Mammary epithelial cell (primary cell): ENCODE measurements at regions of chr20 and their contacts with region 1.

Region 1: GRCh38 chr20:18287915-18288748 is at the start of gene ZNF133:
- DNase-seq: peak; percentile 97
- H3K4me3 ChIP-seq: peak within 1 kb of the TSS; percentile 80 to 85 (median 85)
- H3K27ac ChIP-seq: peak within 1 kb of the TSS; percentile 95
- H3K4me1 ChIP-seq: peaks cover 16% of the 10 kb centered on the region
- H3K27me3 ChIP-seq: no peaks in the 10 kb centered on the region
- CTCF ChIP-seq: no peak
- total RNA-seq, gene ZNF133: 26.8 to 32.6 TPM

Region 2: GRCh38 chr20:17968366-17969279 is 319.5 kb before region 1 on chr20 and contains the starts of genes MGME1 and SNX5:
- CTCF ChIA-PET with region 1: no interaction called
- dilution Hi-C with region 1: no loop called
- in situ Hi-C with region 1: loop called in 1 of 2 experiments (anchors 25 kb)
- intact Hi-C with region 1: no loop called
- DNase-seq: peak; percentile 99
- H3K4me3 ChIP-seq: peak within 1 kb of the TSS; percentile 88 to 93 (median 91)
- H3K27ac ChIP-seq: peak within 1 kb of the TSS; percentile 98
- H3K4me1 ChIP-seq: peaks cover 26% of the 10 kb centered on the region
- H3K27me3 ChIP-seq: no peaks in the 10 kb centered on the region
- CTCF ChIP-seq: no peak
- total RNA-seq, gene MGME1: 15.8 to 36.2 TPM
- total RNA-seq, gene SNX5: 68.0 to 137 TPM

Region 3: DNA sequence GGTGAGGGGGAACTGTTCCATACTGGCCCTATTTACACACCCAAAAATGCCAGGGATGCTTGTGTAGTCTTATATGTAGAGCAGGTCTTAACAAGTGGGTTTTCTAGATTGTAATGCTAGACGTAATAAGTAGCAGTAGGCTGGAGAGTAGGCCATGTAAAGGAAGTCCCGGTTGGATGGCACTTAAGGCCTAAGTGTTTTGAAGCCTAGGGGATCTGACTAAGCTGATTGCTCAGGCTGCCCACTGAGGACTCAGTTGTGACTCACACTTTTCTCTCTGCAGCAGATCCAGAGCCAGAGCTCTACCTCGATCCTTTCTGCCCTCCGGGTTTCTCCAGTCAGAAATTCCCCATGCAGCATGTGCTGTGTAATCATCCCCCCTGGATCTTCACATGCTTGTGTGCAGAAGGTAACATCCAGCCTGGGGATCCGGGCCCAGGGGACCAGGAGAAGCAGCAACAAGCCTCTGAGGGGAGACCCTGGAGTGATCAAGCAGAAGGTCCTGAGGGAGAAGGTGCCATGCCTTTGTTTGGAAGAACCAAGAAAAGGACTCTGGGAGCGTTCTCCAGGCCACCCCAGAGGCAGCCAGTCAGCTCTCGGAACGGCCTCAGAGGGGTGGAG is 26.8 kb after region 1 on chr20:
- CTCF ChIA-PET with region 1: no interaction called
- dilution Hi-C with region 1: no loop called
- in situ Hi-C with region 1: no loop called
- intact Hi-C with region 1: loop called (anchors 1 kb)
- DNase-seq: peak; percentile 99
- H3K4me3 ChIP-seq: no peak overlapping the region
- H3K27ac ChIP-seq: peak overlapping the region; percentile 83
- H3K4me1 ChIP-seq: peaks cover 35% of the 10 kb centered on the region
- H3K27me3 ChIP-seq: no peaks in the 10 kb centered on the region
- CTCF ChIP-seq: no peak

Region 4: DNA sequence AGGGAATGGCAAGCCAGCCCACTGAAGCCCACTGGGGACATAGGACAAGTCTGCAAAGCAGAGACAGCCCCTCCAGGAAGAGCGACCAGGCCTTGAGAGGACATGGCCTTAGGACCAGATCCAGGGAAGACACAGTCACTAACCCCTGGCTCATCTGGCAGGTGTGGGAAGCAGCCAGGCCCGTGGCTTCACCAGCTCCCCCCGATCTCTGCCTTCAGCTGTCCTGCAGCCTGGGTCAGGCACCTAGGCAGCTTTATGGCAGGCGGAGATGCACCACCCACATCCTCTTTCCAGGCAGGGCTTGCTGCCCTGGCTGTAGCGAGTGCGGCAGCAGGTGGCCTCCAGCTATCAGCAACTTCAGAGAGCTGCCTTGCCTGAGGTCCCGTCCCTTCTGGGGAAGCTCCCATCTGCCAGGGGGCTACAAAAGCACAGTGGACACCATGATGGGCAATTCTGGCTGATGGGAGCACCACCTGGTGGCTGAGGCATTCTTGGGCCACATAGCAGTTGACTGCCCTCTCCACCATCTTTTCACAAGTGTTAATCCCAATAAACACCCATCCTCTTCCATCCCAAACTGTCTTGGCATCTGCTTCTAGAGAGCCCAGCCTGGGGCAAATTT is 92.9 kb after region 1 on chr20:
- CTCF ChIA-PET with region 1: no interaction called
- dilution Hi-C with region 1: loop called (anchors 5 kb)
- in situ Hi-C with region 1: no loop called
- intact Hi-C with region 1: loop called (anchors 2 kb)
- DNase-seq: no peak
- H3K4me3 ChIP-seq: no peak overlapping the region
- H3K27ac ChIP-seq: no peak overlapping the region
- H3K4me1 ChIP-seq: peaks cover 4% of the 10 kb centered on the region
- H3K27me3 ChIP-seq: no peaks in the 10 kb centered on the region
- CTCF ChIP-seq: peak in 1 of 2 donors; percentile 27

Region 5: GRCh38 chr20:18388860-18389259 is 100.7 kb after region 1 on chr20:
- CTCF ChIA-PET with region 1: no interaction called
- dilution Hi-C with region 1: loop called (anchors 5 kb)
- in situ Hi-C with region 1: no loop called
- intact Hi-C with region 1: no loop called
- DNase-seq: peak; percentile 46
- H3K4me3 ChIP-seq: no peak overlapping the region
- H3K27ac ChIP-seq: no peak overlapping the region
- H3K4me1 ChIP-seq: peaks cover 9% of the 10 kb centered on the region
- H3K27me3 ChIP-seq: no peaks in the 10 kb centered on the region
- CTCF ChIP-seq: no peak

Region 6: DNA sequence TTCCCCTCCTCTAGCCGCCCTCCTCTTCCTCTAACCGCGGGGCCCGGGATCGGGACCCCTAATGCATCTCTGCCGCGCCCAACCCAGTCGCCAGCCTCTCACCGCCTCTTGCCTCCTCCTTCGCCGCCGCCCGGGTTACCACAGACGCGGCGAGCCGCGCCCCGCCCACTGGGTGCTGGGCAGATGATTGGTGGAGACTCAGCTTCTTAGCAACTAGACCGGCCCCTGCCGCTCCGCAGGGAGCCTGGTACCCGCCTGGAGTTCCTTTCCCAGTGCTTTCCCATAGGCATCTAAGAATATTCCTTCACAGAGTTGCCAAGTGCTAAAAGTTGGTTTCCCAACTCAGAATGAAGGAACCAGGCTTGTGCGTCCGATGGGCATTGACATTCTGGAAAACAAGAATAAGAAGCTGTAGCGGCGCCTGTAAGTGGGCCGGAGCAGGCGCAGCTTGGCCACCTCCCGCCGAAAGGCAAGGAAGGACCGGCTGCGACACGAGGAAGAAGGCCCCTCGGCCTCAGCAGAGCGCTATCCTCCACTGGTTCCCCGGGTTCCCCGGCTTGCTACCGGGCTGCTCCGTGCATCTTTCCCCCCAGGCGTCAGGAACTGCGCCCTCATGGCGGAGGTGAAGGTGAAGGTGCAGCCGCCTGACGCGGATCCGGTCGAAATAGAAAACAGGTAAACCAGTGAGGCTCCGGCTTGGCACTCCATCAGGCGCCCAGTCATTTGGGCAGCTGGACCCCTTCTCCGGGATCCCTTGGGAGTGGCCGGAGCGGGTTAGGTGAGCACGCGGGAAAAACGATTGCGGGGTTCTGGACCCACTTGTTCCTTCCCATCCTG is 179.0 kb after region 1 on chr20 and contains the starts of genes DZANK1 and POLR3F:
- CTCF ChIA-PET with region 1: no interaction called
- dilution Hi-C with region 1: no loop called
- in situ Hi-C with region 1: no loop called
- intact Hi-C with region 1: loop called (anchors 1 kb)
- DNase-seq: peak; percentile 92
- H3K4me3 ChIP-seq: peak within 1 kb of the TSS; percentile 74 to 96 (median 82)
- H3K27ac ChIP-seq: peak within 1 kb of the TSS; percentile 98
- H3K4me1 ChIP-seq: peaks cover 19% of the 10 kb centered on the region
- H3K27me3 ChIP-seq: no peaks in the 10 kb centered on the region
- CTCF ChIP-seq: no peak
- total RNA-seq, gene DZANK1: 2.7 to 2.8 TPM
- total RNA-seq, gene POLR3F: 10.7 to 15.0 TPM

Region 7: GRCh38 chr20:18662279-18663040 is 374.3 kb after region 1 on chr20:
- CTCF ChIA-PET with region 1: no interaction called
- dilution Hi-C with region 1: no loop called
- in situ Hi-C with region 1: no loop called
- intact Hi-C with region 1: no loop called
- DNase-seq: no peak
- H3K4me3 ChIP-seq: no peak overlapping the region
- H3K27ac ChIP-seq: no peak overlapping the region
- H3K4me1 ChIP-seq: no peaks in the 10 kb centered on the region
- H3K27me3 ChIP-seq: no peaks in the 10 kb centered on the region
- CTCF ChIP-seq: no peak